ENCODE measurements at regions of chr12 and their contacts with region 1.

Region 1: DNA sequence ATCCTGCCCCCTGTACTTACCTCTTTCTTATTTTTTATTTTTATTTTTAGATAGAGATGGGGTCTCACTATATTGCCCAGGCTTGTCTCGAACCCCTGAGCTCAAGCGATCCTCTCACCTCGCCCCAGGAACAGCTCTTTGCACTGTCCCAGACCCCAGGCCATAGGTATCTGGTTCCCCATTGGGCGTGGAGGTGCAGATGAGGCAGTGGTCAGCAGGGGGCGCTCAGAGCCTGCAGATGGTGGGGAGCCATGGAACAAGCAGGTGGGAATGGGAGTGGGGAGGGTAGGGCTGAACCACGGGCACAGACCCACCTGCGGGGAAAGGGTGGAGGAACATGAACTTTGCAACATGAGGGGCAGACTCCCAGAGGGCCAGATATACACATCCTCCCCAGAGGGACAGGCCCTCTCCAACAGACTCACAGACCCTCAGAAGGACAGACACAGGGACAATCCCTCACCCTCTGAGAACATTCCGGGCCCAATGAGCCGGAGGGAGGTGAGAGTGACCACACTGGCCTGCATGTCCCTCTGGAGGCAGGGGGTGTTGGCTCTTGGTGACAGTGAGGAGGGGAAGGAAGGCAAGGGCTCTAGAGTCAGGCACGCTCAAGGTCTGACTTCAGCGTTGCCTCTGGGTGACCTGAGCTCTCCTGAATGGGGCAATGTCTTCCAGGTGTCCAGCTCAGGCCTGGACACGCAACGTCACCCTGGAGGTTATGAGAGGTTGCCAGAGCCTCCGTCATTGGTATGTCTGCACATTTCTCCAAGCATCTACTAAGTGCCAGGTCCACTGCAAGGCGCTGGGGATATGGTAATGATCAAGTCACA is 34.9 kb downstream of the KRT80 start:
- DNase-seq: peak; percentile 69
- H3K4me3 ChIP-seq: no peak overlapping the region
- H3K27ac ChIP-seq: no peak overlapping the region
- H3K4me1 ChIP-seq: peaks cover 25% of the 10 kb centered on the region
- H3K27me3 ChIP-seq: peaks cover 9% of the 10 kb centered on the region
- CTCF ChIP-seq: peak; percentile 94

Region 2: DNA sequence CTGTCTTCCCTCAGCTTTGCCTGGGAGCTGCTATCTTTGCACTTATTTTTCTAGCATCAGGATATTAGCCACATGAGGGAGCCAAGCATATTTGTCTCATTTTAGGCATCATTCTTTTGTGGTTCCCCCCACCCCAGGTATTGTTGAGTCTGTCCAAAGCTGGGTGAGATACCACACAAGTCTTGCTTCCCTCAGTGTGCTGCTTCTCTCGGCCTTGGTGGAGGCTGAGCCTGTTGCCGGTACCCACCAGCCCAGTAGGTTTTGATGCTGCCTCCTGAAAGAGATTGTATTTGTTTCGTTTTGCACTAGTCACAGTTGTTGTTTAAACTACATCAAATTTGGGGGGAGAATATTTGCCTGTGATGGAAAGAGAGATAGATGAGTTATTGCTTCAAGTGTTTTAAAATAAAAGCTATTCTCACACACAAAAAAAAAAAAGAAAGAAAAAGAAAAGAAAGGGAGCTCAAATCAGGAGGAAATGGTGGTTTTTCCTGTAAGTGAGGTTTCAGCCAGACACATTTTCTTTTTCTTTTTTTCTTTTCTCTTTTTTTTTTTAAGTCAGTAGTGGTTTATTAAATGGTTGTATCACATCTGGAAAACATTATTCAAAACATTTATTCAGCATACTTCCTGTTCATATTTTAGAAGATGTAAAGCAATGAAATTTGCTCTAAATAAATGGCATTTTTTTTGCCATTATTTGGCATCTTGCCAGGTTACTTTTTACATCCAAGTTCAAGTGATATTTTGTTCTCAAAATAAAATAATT is 673.8 kb before region 1 on chr12:
- intact Hi-C with region 1: no loop called
- DNase-seq: no peak
- H3K4me3 ChIP-seq: no peak overlapping the region
- H3K27ac ChIP-seq: no peak overlapping the region
- H3K4me1 ChIP-seq: no peaks in the 10 kb centered on the region
- H3K27me3 ChIP-seq: no peaks in the 10 kb centered on the region
- CTCF ChIP-seq: no peak

Region 3: GRCh38 chr12:52327052-52327829 is 170.3 kb after region 1 on chr12:
- intact Hi-C with region 1: loop called (anchors 5 kb)
- DNase-seq: peak; percentile 58
- H3K4me3 ChIP-seq: no peak overlapping the region
- H3K27ac ChIP-seq: no peak overlapping the region
- H3K4me1 ChIP-seq: no peaks in the 10 kb centered on the region
- H3K27me3 ChIP-seq: peaks cover 67% of the 10 kb centered on the region
- CTCF ChIP-seq: peak; percentile 79

Region 4: DNA sequence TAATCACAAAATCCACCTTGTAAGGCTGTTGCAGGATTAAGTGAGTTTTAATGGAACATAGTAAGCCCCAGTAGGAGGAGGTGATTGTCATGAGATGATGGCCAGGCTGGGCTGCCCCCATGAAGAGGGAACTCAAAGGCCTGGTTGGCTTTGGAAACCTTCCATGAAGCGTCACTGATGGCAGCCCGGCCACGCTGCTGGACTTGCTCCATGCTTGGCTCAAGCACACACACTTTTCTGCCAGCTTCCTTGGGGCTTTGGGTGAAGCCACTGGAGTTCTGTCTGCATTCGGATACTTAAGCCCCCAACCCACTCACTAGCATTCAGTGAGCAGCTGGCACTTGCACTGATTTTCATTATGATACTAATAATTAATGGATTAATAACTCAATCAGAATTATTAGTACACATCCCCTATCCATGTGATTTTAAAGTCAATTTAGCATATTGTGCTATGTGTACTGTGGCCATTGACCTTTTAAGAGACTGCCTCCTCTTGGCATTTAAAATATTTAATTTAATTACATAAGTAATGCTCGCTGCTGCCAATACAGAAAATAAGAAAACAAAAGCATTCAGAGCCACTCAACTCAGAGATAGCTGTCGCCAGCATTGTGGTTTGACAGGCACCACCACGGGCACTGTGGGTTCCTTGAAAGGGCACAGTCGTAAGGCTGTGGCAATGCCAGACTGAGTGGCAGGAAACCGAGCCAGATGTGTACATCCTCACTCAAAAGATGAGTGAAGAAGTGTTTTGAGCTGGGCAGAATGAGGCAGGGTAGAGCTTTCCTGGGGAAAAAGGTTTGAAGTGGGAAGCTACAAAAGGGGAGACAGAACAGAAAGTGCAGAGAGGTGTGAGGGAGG is 194.5 kb after region 1 on chr12:
- intact Hi-C with region 1: no loop called
- DNase-seq: peak; percentile 50
- H3K4me3 ChIP-seq: no peak overlapping the region
- H3K27ac ChIP-seq: no peak overlapping the region
- H3K4me1 ChIP-seq: peaks cover 20% of the 10 kb centered on the region
- H3K27me3 ChIP-seq: peaks cover 54% of the 10 kb centered on the region
- CTCF ChIP-seq: no peak

Region 5: DNA sequence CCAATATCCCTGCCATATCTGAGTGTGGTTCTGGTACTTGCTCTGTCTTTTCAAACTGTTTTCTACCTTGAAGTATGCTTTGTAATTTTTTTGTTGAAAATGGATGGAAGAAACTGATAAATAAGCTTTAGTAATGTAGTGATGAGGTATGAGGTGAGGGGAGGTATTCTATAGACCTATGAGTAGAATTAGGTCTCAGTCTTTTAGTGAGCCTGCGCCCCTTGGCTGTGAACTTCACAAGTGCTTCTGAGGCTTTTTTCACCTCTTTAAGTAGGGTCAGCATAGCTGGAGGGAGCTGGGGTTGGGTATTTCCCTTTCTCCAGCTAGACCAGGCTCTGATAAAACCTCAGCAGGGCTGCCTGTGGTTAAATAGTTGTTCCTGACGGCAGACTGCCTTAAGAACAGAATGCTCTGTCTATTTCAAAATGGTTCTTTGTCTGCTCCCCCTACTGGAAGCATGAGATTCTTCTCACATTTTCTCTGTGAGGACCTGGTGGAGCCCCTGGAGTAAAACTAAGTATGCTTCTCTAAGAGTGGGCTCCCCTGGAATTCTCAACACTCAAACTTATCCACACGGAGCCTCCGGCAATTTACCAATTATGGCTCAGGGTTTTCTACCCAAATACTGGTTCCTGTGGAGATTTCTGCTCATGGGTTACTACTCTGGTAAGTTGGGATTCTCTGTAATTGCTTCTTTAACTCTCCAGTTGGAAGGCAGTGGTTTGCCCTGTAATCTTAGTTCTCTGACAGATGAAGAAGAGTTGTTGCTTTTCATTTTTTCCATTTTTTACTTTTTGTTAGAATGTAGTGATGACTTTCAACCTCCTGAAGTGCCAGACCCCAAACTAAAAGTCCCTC is 350.1 kb after region 1 on chr12:
- intact Hi-C with region 1: loop called (anchors 5 kb)
- DNase-seq: no peak
- H3K4me3 ChIP-seq: no peak overlapping the region
- H3K27ac ChIP-seq: no peak overlapping the region
- H3K4me1 ChIP-seq: no peaks in the 10 kb centered on the region
- H3K27me3 ChIP-seq: peaks cover 53% of the 10 kb centered on the region
- CTCF ChIP-seq: peak; percentile 70